ENCODE measurements at regions of chr6 and their contacts with region 1.

Region 1: GRCh38 chr6:132512638-132513632 is at the start of gene STX7:
- DNase-seq: peak; percentile 94
- H3K4me3 ChIP-seq: peak within 1 kb of the TSS; percentile 82
- H3K27ac ChIP-seq: peak within 1 kb of the TSS; percentile 79
- H3K4me1 ChIP-seq: peaks cover 41% of the 10 kb centered on the region
- CTCF ChIP-seq: no peak
- total RNA-seq, gene STX7: 66.5 and 88.8 TPM in 2 replicates

Region 2: DNA sequence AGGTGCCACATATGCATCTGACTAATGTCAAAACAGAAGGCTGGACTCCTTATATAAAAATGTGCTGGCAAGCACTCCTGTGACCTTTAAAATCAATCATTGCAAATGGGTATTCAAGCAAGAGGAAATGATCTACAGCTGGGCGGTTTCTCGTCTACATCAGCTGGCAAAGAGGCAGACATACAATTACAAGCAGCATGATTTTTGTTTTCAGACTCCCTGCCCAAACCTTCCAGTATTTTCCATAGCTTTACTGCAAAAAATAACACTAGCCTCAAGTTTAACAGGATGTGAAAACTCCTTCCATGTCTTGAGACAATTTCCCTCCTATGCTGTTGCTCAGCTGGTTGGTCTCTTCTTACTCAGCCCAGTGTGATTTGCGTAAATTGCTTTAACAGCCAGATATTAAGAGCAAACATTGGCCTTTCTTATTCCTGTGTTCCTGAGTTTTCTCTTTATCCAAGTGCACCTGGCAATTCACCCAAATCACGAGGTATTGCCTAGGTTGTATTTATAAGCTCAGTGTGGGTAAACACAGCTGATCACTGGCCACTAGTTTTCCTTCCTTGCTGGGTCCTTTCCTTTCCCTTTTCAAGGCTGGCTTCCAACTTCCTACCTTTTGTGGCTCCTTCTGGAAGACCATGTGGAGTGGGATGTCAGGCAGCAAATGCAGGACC is 242.1 kb before region 1 on chr6:
- CTCF ChIA-PET with region 1: no interaction called
- POLR2A ChIA-PET with region 1: interaction called, 14 read pairs
- intact Hi-C with region 1: no loop called
- DNase-seq: peak; percentile 61
- H3K4me3 ChIP-seq: peak overlapping the region; percentile 13
- H3K27ac ChIP-seq: peak overlapping the region; percentile 100
- H3K4me1 ChIP-seq: peaks cover 81% of the 10 kb centered on the region
- CTCF ChIP-seq: no peak

Region 3: DNA sequence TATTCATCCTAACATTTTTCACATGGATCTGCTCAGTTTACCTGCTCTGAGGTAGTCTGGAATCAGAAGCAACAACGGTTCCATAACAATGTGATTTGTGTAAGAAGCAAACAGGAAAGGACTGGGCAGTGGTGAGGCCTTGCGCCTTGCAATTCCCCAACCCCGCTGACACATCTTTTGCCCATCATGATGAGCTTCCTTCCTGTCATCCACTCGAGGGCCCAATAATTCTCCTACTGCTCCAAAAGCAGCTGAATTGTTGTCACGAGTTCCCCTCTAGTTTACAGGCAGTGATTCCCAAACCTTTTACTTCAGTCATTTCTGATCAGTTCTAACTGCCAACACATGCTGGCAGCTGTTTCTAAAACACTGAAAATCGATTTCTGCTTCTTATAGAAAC is 22.9 kb before region 1 on chr6:
- CTCF ChIA-PET with region 1: interaction called, 8 read pairs
- POLR2A ChIA-PET with region 1: interaction called, 63 read pairs
- intact Hi-C with region 1: loop called (anchors 2 kb)
- DNase-seq: peak; percentile 48
- H3K4me3 ChIP-seq: peak overlapping the region; percentile 66
- H3K27ac ChIP-seq: peak overlapping the region; percentile 100
- H3K4me1 ChIP-seq: peaks cover 75% of the 10 kb centered on the region
- CTCF ChIP-seq: no peak

Region 4: GRCh38 chr6:132768051-132768517 is 255.1 kb after region 1 on chr6:
- CTCF ChIA-PET with region 1: no interaction called
- POLR2A ChIA-PET with region 1: interaction called, 5 read pairs
- intact Hi-C with region 1: loop called (anchors 5 kb)
- DNase-seq: peak; percentile 59
- H3K4me3 ChIP-seq: peak overlapping the region; percentile 26
- H3K27ac ChIP-seq: no peak overlapping the region
- H3K4me1 ChIP-seq: peaks cover 8% of the 10 kb centered on the region
- CTCF ChIP-seq: peak; percentile 88